Dorsolateral prefrontal cortex (tissue), 120 donors: ENCODE measurements at regions of chr5 and their contacts with region 1.

Region 1: DNA sequence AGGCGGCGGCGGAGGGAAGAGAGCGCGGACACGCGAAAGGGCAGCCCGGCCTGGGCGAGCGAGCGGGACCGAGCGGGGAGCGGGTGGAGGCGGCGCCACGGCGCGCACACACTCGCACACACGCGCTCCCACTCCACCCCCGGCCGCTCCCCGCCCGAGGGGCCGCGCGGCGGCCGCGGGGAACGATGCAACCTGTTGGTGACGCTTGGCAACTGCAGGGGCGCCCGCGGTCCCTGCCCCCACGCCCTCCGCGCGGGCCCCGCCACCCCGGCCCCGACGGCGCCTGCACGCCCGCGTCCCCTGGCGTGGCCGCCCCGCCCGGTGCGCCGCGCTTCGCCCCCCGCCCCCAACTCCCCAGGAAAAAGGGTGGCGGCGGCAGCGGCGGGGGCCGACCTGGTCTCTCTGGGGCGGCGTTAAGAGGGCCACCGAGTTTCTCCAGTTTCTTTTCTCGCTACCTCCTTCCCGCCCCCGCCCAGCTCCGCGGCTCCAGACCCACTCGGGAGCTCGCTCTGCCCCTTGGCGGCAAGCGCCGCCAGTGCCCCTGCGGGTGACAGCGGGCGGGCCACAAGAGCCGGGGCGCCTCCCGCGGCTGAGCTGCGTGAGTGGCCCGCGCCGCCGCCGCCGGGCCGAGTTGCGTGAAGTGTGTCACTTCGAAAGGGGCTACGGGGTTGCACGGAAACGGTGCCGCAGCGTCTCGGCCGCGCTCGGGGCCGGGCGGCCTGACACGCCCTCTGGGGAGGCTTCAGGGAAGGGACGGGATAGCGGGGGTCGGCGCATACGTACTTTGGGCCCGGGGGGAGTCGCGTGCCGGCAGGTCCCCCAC is at the start of gene NR3C1:
- DNase-seq: peak; percentile 67 to 89 (median 80)
- H3K4me3 ChIP-seq: peak within 1 kb of the TSS; percentile 66 to 97 (median 88)
- H3K27ac ChIP-seq: peak within 1 kb of the TSS; percentile 79 to 100 (median 99)
- H3K27me3 ChIP-seq: no peaks in the 10 kb centered on the region
- CTCF ChIP-seq: peak in 55 of 56 donors; percentile 0 to 71 (median 46)
- total RNA-seq, gene NR3C1: 56.9 to 114 (median 87.8) TPM

Region 2: DNA sequence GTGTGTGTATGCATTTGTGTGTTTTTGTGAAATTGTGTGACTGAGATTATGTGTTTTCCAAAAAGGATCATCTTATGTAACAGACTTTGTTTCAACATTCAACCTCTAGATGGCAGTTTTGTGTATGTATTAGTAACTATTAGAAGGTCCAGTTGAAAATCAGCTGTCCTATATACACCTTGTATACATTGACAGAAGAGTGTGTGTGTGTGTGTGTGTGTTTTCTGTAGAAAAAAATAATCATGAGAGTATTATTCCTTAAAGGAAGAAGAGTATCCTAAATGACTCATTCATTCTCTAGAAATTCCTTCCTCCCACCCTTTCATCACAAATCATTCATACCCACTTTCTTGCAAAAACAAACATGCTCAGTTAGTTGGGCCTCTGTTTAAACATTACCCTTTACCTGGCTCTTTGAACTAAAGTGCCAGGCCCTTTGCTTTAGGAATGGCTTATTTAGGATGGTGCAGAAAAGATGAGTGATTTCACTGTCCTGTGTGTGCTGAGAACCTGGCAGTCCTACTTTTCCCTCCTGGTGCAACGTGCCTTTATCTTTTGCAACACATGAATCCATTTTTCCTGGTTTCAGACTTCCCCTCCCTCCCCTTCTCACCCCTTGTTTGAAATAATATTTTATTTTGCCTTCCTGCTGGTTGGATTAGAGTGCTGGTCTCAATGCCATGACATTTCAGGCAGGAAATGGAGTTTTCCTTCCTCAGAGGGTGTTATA is 481.4 kb before region 1 on chr5:
- intact Hi-C with region 1: loop called (anchors 10 kb)
- DNase-seq: no peak
- H3K4me3 ChIP-seq: no peak overlapping the region
- H3K27ac ChIP-seq: peak overlapping the region in 31 of 59 donors; percentile 2 to 78 (median 37)
- H3K27me3 ChIP-seq: no peaks in the 10 kb centered on the region
- CTCF ChIP-seq: peak; percentile 37 to 84 (median 68)

Region 3: DNA sequence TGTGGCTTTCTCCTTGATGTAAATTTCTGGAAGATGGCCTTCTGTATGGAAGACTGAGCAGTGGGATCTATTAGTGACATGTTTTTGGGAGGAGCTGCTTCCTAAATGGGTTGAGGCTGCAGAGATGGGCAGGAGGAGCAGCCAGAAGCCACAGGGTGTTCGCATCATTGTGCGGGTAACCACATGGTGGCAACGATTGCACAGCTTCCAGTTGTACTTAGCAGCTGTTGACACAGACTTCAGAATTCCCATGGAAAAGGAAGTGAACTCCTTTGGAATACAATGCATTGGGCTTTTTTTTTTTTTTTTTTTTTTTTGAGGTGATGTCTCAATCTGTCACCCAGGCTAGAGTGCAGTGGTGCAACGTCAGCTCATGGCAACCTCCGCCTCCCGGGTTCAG is 297.6 kb before region 1 on chr5:
- intact Hi-C with region 1: loop called in 1 of 2 experiments (anchors 5 kb)
- DNase-seq: peak in 5 of 10 donors; percentile 35 to 60 (median 53)
- H3K4me3 ChIP-seq: no peak overlapping the region
- H3K27ac ChIP-seq: peak overlapping the region in 8 of 59 donors; percentile 11 to 66 (median 40)
- H3K27me3 ChIP-seq: no peaks in the 10 kb centered on the region
- CTCF ChIP-seq: peak in 48 of 56 donors; percentile 19 to 60 (median 38)

Region 4: DNA sequence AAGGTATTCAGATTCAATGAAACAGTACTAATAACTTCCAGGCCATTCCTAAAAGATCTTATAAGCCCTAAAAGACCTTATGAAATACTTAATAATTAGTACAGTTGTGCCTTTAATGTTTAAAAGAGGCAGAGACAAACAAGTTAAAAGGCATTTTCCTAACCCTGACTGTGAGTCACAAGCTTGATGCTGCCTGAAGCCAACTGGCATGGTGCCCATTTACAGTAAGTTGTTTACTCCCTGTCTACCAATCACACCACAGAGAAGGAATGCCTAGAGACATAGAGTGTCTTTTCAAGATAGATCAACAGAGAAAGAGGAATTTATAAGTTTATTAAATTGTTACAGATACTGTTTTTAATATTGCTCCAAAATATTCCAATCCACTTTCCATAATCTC is 48.1 kb before region 1 on chr5:
- intact Hi-C with region 1: loop called in 1 of 2 experiments (anchors 5 kb)
- DNase-seq: peak in 5 of 10 donors; percentile 11 to 75 (median 37)
- H3K4me3 ChIP-seq: peak overlapping the region in 13 of 59 donors; percentile 3 to 39 (median 15)
- H3K27ac ChIP-seq: peak overlapping the region in 55 of 59 donors; percentile 0 to 85 (median 70)
- H3K27me3 ChIP-seq: no peaks in the 10 kb centered on the region
- CTCF ChIP-seq: no peak

Region 5: DNA sequence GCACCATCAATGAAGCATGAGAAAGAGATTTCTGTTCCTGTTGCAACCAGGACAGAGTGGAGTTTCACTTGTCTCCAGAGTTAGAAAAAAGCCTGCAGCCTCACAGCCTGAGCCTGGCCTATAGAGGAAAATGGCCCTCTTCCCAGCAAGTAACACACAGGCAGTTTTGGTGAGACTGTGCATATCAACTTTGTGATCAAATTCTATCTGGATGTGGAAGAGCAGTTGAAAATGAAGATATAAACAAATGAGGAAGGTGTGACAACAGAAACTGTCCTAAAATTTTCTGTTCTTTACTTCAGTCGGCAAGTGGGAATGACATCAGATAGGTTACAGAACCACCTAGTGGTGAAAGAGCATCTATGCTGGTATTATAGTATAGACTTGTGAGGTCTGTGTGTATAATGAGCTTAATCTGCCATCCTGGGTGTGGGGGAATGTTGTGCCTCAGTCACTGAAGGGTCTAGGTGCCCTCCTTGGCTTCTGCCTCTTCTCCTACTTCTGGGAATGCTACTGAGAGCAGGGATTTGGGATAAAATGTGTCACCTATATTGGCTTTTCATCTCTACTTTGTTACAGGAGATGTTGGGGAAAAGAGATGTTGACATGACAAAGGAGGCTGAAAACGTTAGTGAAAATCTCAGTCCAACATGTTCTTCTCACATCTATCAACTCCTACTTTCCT is 738.5 kb after region 1 on chr5:
- intact Hi-C with region 1: loop called in 1 of 2 experiments (anchors 10 kb)
- DNase-seq: no peak
- H3K4me3 ChIP-seq: no peak overlapping the region
- H3K27ac ChIP-seq: peak overlapping the region in 5 of 59 donors; percentile 1 to 35 (median 24)
- H3K27me3 ChIP-seq: no peaks in the 10 kb centered on the region
- CTCF ChIP-seq: peak; percentile 53 to 80 (median 71)